HCT116 (cell line): ENCODE measurements at regions of chr6 and their contacts with region 1.

Region 1: GRCh38 chr6:97705568-97705967 is 422.6 kb upstream of the MMS22L start:
- DNase-seq: peak; percentile 7
- ATAC-seq: peak; percentile 54
- H3K4me3 ChIP-seq: no peak overlapping the region
- H3K27ac ChIP-seq: no peak overlapping the region
- H3K4me1 ChIP-seq: no peaks in the 10 kb centered on the region
- H3K27me3 ChIP-seq: no peaks in the 10 kb centered on the region
- CTCF ChIP-seq: peak; percentile 40 to 66 (median 46); a peak in 4 of 6 replicates
- POLR2A ChIP-seq: no peak
- RAD21 ChIP-seq: peak; percentile 59

Region 2: GRCh38 chr6:97401533-97401932 is 304.0 kb before region 1 on chr6:
- CTCF ChIA-PET with region 1: no interaction called
- POLR2A ChIA-PET with region 1: no interaction called
- RAD21 ChIA-PET with region 1: no interaction called
- intact Hi-C with region 1: no loop called
- DNase-seq: no peak
- ATAC-seq: no peak
- H3K4me3 ChIP-seq: no peak overlapping the region
- H3K27ac ChIP-seq: no peak overlapping the region
- H3K4me1 ChIP-seq: no peaks in the 10 kb centered on the region
- H3K27me3 ChIP-seq: no peaks in the 10 kb centered on the region
- CTCF ChIP-seq: no peak
- POLR2A ChIP-seq: no peak
- RAD21 ChIP-seq: no peak

Region 3: DNA sequence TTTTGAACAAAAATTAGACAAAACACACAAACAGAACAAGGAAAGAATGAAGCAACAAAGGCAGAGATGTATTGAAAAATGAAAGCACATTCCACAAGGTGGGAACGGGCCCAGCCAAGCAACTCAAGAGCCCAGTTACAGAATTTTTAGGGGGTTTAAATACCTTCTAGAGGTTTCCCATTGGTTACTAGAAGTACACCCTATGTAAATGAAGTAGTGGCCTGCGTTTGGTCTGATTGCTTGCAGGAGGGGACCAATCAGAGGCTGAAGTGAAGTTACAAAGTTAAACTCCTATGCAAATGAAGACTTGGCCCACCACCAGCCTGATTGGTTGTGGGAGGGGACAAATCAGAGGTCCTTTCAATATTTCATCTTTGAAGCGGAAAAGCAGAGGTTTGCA is 171.1 kb after region 1 on chr6:
- CTCF ChIA-PET with region 1: no interaction called
- POLR2A ChIA-PET with region 1: no interaction called
- RAD21 ChIA-PET with region 1: no interaction called
- intact Hi-C with region 1: no loop called
- DNase-seq: no peak
- ATAC-seq: no peak
- H3K4me3 ChIP-seq: no peak overlapping the region
- H3K27ac ChIP-seq: no peak overlapping the region
- H3K4me1 ChIP-seq: no peaks in the 10 kb centered on the region
- H3K27me3 ChIP-seq: peaks cover 4% of the 10 kb centered on the region; the same call in 1 of the 2 replicates
- CTCF ChIP-seq: no peak
- POLR2A ChIP-seq: no peak
- RAD21 ChIP-seq: no peak

Region 4: GRCh38 chr6:97978855-97979271 is 273.3 kb after region 1 on chr6:
- CTCF ChIA-PET with region 1: no interaction called
- POLR2A ChIA-PET with region 1: no interaction called
- RAD21 ChIA-PET with region 1: no interaction called
- intact Hi-C with region 1: loop called (anchors 2 kb)
- DNase-seq: peak; percentile 32
- ATAC-seq: peak; percentile 94
- H3K4me3 ChIP-seq: no peak overlapping the region
- H3K27ac ChIP-seq: no peak overlapping the region
- H3K4me1 ChIP-seq: peaks cover 0 to 7% of the 10 kb centered on the region in 2 experiments; a peak in 1 of 4 replicates
- H3K27me3 ChIP-seq: peaks cover 15% of the 10 kb centered on the region; the same call in 1 of the 2 replicates
- CTCF ChIP-seq: peak; percentile 28 to 72 (median 62); a peak in 4 of 6 replicates
- POLR2A ChIP-seq: peak; percentile 95
- RAD21 ChIP-seq: peak; percentile 62

Region 5: DNA sequence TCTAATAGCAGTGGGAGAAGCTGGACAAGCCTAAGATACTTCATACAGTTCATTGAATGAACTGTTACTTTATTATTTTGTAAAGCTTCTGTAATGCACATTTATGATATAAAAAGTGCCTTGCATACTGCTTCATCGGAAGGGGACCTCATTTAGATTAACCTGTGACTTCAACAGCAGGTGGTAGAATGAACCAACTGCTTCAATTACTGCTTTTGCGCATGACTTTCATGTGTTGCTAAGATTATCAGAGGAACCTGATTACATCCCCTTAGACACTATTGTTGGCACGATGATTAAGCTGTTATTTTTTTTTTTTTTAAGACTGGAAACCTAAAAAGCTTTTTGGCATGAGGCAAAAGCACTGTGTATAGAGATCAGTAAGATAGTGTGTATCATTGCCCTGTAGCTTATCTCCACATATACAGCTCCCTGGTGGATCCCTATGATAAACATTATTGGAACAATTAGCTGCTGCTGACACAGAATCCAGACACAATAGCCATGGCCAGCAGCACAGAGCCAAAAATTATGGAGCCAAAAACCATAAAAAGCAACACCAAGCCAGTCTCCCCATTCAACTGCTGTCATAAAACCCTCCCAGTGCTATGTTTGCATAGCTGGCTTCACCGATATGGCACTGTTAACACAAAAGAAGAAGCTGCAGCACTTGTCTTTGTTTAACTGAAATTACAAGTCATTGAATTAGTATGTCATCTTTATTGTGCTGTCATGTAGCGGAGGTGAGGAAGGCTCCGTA is 309.1 kb after region 1 on chr6:
- CTCF ChIA-PET with region 1: no interaction called
- POLR2A ChIA-PET with region 1: no interaction called
- RAD21 ChIA-PET with region 1: no interaction called
- intact Hi-C with region 1: no loop called
- DNase-seq: no peak
- ATAC-seq: no peak
- H3K4me3 ChIP-seq: no peak overlapping the region
- H3K27ac ChIP-seq: no peak overlapping the region
- H3K4me1 ChIP-seq: no peaks in the 10 kb centered on the region
- H3K27me3 ChIP-seq: peaks cover 26% of the 10 kb centered on the region
- CTCF ChIP-seq: no peak
- POLR2A ChIP-seq: no peak
- RAD21 ChIP-seq: no peak

Region 6: DNA sequence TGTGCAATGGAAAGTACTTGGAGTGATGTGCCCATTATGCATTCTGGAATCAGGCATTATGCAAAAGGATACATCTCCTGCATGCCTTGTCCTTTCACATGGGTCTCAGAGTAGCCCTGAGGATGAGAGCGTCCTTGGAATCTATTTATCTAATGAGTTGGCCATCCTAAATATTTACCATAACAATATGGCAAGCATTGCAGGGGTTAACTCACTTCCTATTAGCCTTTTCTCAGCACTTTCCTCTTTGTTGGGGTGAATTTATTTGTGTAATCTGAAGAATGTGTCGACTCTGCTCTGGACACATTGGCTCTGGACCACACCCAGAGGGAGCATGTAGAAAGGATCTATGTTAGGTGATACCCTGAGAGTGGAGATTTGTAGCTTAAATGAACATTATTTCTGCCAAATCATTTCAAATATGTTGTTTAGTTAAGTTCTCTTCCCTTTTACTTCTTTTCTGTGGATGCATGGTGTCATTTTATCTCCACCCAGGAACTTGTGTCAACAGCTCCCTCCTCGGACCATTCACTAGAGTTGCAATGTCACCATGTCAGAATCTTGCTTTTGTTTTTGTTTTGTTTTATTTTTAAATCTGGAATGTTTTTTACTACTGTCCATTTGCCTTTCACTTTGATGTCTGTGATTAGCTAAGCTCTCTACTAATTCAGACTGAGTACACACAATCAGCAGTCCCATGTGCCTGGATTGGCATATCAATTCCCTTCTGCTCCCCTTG is 334.5 kb after region 1 on chr6:
- CTCF ChIA-PET with region 1: no interaction called
- POLR2A ChIA-PET with region 1: no interaction called
- RAD21 ChIA-PET with region 1: no interaction called
- intact Hi-C with region 1: loop called (anchors 5 kb)
- DNase-seq: no peak
- ATAC-seq: no peak
- H3K4me3 ChIP-seq: no peak overlapping the region
- H3K27ac ChIP-seq: no peak overlapping the region
- H3K4me1 ChIP-seq: no peaks in the 10 kb centered on the region
- H3K27me3 ChIP-seq: peaks cover 42% of the 10 kb centered on the region
- CTCF ChIP-seq: peak in 1 of 3 experiments; percentile 45; a peak in 2 of 6 replicates
- POLR2A ChIP-seq: no peak
- RAD21 ChIP-seq: peak; percentile 49

Region 7: DNA sequence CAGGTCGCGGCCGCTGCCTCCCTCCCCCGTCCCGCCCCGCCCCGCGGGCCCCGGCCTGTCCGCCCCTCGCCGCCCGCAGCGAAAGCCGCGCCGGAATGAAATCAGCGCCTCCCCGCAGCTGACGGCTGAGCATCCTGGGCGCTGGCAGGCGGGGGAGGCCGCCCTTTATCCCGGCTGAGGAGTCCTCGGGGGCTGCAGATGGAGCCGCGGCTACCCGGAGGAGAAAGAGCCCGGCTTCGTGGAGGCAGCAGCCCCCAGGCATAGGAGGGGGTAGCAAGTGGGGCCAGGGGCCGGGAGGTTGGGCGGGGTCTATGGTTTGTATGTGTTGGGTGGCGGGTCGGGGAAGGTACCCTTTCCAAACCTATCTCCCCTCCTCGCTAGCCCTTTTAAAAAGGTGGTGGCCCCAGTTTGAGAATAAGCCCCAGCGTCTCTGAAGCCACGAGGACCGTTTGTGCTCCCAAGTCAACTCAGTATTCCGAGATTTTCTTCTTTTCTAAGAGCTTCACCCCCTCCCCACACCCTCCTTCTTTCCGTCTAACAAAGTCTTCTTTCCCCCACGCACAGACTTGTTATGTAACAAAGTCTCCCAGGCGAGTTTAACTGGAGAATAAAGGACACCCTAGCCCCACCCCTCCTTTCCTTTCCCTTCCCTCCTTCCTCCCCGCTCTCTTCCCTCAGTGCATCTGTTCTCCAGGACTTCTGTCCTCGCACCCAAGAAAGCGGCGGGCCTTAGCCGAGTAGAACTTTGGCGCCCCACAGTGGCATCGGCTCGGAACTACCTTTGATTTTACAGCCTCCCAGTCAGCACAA is 1139.8 kb after region 1 on chr6:
- CTCF ChIA-PET with region 1: no interaction called
- POLR2A ChIA-PET with region 1: no interaction called
- RAD21 ChIA-PET with region 1: no interaction called
- intact Hi-C with region 1: loop called (anchors 5 kb)
- DNase-seq: peak; percentile 34
- ATAC-seq: peak; percentile 97
- H3K4me3 ChIP-seq: no peak overlapping the region
- H3K27ac ChIP-seq: no peak overlapping the region
- H3K4me1 ChIP-seq: no peaks in the 10 kb centered on the region
- H3K27me3 ChIP-seq: no peaks in the 10 kb centered on the region
- CTCF ChIP-seq: peak; percentile 57 to 91 (median 84); a peak in 5 of 6 replicates
- POLR2A ChIP-seq: no peak
- RAD21 ChIP-seq: peak; percentile 80